ENCODE measurements at regions of chr10 and their contacts with region 1.

Region 1: GRCh38 chr10:16520900-16521299 is 779 bp downstream of the C1QL3 start:
- DNase-seq: peak in 4 of 6 donors; percentile 13 to 81 (median 47)
- ATAC-seq: peak; percentile 21 to 71 (median 63)
- H3K4me3 ChIP-seq: peak overlapping the region; percentile 11 to 51 (median 30)
- H3K27ac ChIP-seq: no peak overlapping the region
- H3K4me1 ChIP-seq: no peaks in the 10 kb centered on the region
- H3K27me3 ChIP-seq: peaks cover 0 to 4% (median 0%) of the 10 kb centered on the region in 4 donors
- CTCF ChIP-seq: no peak

Region 2: DNA sequence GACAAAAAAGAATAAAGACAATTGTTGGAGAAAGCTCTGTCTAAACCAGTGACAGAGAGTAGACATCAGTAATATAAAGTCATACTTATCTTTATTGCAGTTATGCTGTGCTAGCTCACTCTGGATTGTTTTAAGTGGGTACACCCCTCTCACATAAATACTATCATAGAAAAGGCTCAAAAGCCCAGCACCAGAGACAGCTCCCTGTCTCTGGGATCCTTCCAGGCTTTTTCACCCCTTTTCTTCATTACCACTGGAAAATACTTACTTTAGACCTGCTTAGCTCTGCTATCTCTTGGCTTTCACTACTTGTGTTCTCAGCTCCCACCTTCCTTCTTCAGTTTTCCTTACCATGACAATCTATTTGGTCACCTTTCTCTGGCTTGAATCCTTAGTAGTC is 401.5 kb before region 1 on chr10:
- intact Hi-C with region 1: no loop called
- DNase-seq: no peak
- ATAC-seq: no peak
- H3K4me3 ChIP-seq: no peak overlapping the region
- H3K27ac ChIP-seq: no peak overlapping the region
- H3K4me1 ChIP-seq: no peaks in the 10 kb centered on the region
- H3K27me3 ChIP-seq: no peaks in the 10 kb centered on the region
- CTCF ChIP-seq: no peak

Region 3: GRCh38 chr10:16440396-16441133 is 80.3 kb before region 1 on chr10:
- intact Hi-C with region 1: loop called in 1 of 3 experiments (anchors 10 kb)
- DNase-seq: peak in 4 of 6 donors; percentile 56 to 65 (median 60)
- ATAC-seq: peak; percentile 60 to 65 (median 62)
- H3K4me3 ChIP-seq: peak overlapping the region in 2 of 4 donors; percentile 20 to 34
- H3K27ac ChIP-seq: peak overlapping the region; percentile 51 to 88 (median 84)
- H3K4me1 ChIP-seq: peaks cover 11 to 41% (median 28%) of the 10 kb centered on the region in 3 donors
- H3K27me3 ChIP-seq: no peaks in the 10 kb centered on the region
- CTCF ChIP-seq: no peak

Region 4: DNA sequence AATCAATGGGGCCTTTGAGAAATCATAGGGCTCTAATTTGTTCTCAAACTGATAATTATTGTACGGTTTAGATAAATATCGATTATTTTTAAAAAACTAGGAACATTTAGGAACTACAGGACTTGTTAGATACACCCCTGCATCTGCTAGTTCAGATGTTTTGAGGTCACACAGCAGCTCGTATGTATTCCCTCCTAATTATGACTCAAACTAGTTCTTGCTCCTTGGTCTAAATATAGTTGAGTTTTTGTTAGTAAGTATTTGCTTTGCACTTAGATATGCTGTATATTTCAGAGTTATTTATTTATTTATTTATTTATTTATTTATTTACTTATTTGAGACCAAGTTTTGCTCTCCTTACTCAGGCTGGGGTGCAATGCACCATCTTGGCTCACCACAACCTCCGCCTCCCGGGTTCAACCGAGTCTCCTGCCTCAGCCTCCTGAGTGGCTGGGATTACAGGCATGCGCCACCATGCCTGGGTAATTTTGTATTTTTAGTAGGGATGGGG is 61.4 kb before region 1 on chr10:
- intact Hi-C with region 1: no loop called
- DNase-seq: no peak
- ATAC-seq: no peak
- H3K4me3 ChIP-seq: no peak overlapping the region
- H3K27ac ChIP-seq: no peak overlapping the region
- H3K4me1 ChIP-seq: peaks cover 0 to 6% (median 5%) of the 10 kb centered on the region in 3 donors
- H3K27me3 ChIP-seq: no peaks in the 10 kb centered on the region
- CTCF ChIP-seq: no peak

Measured in pancreas (tissue), 10 donors.